ENCODE measurements at regions of chr2 and their contacts with region 1.

Region 1: GRCh38 chr2:137947728-137948336 is 16.4 kb upstream of the HNMT start:
- DNase-seq: no peak
- ATAC-seq: peak; percentile 76
- H3K4me3 ChIP-seq: no peak overlapping the region
- H3K27ac ChIP-seq: no peak overlapping the region
- H3K4me1 ChIP-seq: peaks cover 5% of the 10 kb centered on the region; the same call in 1 of the 2 replicates
- H3K27me3 ChIP-seq: no peaks in the 10 kb centered on the region
- CTCF ChIP-seq: peak; percentile 69; the same call in 1 of the 2 replicates

Region 2: GRCh38 chr2:137910641-137911040 is 37.2 kb before region 1 on chr2:
- CTCF ChIA-PET with region 1: no interaction called
- POLR2A ChIA-PET with region 1: no interaction called
- in situ Hi-C with region 1: no loop called
- intact Hi-C with region 1: no loop called
- DNase-seq: no peak
- ATAC-seq: no peak
- H3K4me3 ChIP-seq: no peak overlapping the region
- H3K27ac ChIP-seq: no peak overlapping the region
- H3K4me1 ChIP-seq: no peaks in the 10 kb centered on the region
- H3K27me3 ChIP-seq: no peaks in the 10 kb centered on the region
- CTCF ChIP-seq: peak; percentile 57; the same call in 1 of the 2 replicates

Region 3: DNA sequence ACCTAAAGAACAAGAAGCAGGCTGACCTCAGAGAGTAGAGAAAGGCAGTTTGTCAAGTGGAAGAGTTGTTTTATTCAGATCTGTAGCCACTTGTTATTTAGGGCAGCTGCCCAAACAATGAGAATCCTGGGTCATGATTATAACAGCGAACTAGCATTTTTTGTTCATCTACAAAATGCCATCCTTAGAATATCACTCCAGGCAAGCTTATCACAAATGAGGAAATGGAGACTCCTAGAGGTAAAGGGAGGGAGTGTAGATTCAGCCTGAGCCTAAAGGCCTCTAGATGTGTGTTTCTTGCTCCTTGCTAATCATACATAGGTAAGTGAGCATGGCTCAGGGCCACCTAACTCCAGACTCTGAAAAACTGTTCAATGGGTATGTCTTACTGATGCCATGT is 142.5 kb after region 1 on chr2:
- CTCF ChIA-PET with region 1: no interaction called
- POLR2A ChIA-PET with region 1: no interaction called
- in situ Hi-C with region 1: no loop called
- intact Hi-C with region 1: loop called (anchors 1 kb)
- DNase-seq: peak; percentile 27
- ATAC-seq: peak; percentile 73
- H3K4me3 ChIP-seq: no peak overlapping the region
- H3K27ac ChIP-seq: no peak overlapping the region
- H3K4me1 ChIP-seq: no peaks in the 10 kb centered on the region
- H3K27me3 ChIP-seq: no peaks in the 10 kb centered on the region
- CTCF ChIP-seq: peak; percentile 59

Region 4: DNA sequence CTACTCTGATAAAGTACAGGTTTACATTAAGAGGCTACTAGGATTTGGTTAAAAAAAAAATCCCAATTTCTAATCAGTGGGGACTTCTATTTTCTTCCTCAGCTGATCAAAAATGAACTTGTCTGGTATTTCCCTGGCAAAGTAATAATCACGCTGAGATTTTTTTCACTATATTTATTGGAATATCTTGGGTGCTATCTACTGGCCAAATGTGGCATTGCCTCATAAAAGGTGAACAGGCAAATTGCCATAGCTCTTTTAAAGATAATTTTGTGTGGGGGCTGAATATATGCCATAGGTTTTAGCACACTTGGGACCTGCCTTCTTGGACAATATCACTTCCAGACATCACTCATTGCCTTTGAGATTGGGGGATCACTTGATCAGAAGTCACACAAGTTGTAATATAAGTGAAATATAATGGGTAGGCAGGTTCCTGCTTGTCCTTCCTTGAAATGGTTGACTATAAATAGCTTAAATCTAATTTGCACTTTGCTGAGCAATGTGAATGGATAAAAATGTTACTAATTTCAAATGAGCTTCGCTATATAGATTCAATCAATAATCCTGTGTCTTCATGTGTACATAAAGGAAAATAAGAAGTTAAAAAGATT is 839.3 kb after region 1 on chr2:
- CTCF ChIA-PET with region 1: interaction called, 3 read pairs
- POLR2A ChIA-PET with region 1: no interaction called
- in situ Hi-C with region 1: no loop called
- intact Hi-C with region 1: loop called (anchors 10 kb)
- DNase-seq: peak; percentile 18
- ATAC-seq: no peak
- H3K4me3 ChIP-seq: no peak overlapping the region
- H3K27ac ChIP-seq: no peak overlapping the region
- H3K4me1 ChIP-seq: no peaks in the 10 kb centered on the region
- H3K27me3 ChIP-seq: no peaks in the 10 kb centered on the region
- CTCF ChIP-seq: peak; percentile 75